ENCODE measurements at regions of chr7 and their contacts with region 1.

Region 1: DNA sequence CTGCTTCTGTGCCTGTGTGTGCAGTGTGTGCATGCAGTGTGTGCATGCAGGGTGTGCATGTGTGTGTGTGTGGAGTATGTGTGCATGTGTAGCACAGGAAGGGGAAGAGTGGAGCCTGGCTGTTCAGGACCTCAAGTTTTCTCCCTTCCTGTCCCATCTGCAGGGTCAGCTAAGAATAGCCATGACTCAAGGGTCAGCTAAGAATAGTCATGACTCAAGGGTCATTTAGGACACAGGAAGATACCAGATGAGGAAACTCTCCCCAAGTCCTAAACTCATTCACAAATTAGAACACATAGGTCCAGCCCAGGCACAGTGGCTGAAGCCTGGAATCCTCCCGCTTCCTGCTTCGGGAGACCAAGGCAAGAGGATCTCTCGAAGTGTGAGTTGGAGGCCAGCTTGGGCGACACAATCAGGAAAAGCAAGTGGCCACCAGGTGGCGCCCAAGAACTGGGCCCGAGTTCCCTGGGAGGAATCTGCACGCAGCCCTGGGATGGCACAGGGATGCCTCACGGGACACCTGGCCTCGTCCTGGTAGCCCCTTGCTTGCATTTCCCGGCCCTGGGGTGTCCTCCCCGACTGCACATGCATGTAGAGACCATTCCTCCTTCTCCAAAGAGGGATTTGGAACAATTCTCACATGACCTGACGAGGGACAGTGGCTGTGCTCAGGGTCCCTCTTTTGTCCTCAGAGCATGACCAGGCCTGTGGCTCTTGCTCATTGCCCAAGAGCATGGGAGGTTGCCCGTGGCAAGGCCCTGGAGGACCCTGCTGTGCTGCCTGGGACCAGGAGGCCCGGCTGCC is 21.4 kb upstream of the VOPP1 start:
- DNase-seq: peak; percentile 79
- ATAC-seq: peak; percentile 60
- H3K4me3 Mint-ChIP-seq: no peak overlapping the region
- H3K27ac Mint-ChIP-seq: no peak overlapping the region
- H3K4me1 Mint-ChIP-seq: peaks cover 5% of the 10 kb centered on the region
- H3K27me3 Mint-ChIP-seq: peaks cover 2% of the 10 kb centered on the region
- CTCF ChIP-seq: peak; percentile 88

Region 2: DNA sequence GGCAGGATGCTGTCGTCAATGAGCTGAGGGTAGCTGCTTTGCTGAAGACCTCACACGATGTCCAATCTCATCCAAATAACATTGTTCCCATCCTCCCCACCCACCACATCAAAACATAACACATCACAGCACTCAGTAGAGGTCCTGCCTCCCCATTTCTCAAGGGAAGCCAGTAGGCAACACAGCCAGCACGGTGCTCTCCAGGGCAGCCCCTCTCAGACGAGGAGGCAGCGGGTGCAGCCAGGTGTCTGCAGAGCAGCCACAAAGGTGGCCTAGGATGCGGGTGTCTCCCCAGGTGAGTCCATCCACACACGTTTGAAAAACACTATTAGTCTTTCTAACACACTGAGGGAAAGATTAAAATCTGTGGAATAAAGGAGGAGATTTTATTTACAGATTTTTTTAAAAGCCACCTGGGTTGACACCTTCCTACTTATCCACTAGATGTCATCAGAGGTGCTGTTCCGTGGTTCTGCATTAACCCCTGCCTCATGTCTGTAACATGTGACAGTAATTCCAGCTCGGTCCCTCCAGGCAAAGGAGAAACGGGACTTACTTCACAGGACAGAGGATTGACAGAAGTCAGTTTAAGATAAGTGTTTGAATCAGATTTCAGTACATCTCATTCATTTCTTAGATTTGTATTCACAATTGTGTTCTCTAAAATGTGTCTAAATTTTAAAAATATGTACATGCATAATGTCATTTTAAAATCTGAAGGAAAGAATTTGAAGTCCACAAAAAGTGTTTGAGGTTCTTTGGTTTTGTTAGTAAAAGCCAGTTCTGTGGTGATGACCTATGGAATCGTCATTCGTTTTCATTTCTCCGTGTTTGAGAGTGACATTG is 160.6 kb before region 1 on chr7:
- CTCF ChIA-PET with region 1: interaction called, 12 read pairs
- POLR2A ChIA-PET with region 1: no interaction called
- intact Hi-C with region 1: loop called (anchors 5 kb)
- DNase-seq: peak; percentile 33
- ATAC-seq: peak; percentile 77
- H3K4me3 Mint-ChIP-seq: no peak overlapping the region
- H3K27ac Mint-ChIP-seq: no peak overlapping the region
- H3K4me1 Mint-ChIP-seq: peaks cover 18% of the 10 kb centered on the region
- H3K27me3 Mint-ChIP-seq: no peaks in the 10 kb centered on the region
- CTCF ChIP-seq: peak; percentile 63

Region 3: GRCh38 chr7:55469271-55469681 is 124.4 kb before region 1 on chr7:
- CTCF ChIA-PET with region 1: interaction called, 11 read pairs
- POLR2A ChIA-PET with region 1: no interaction called
- intact Hi-C with region 1: no loop called
- DNase-seq: peak; percentile 17
- ATAC-seq: peak; percentile 69
- H3K4me3 Mint-ChIP-seq: no peak overlapping the region
- H3K27ac Mint-ChIP-seq: peak overlapping the region; percentile 65
- H3K4me1 Mint-ChIP-seq: peaks cover 44% of the 10 kb centered on the region
- H3K27me3 Mint-ChIP-seq: no peaks in the 10 kb centered on the region
- CTCF ChIP-seq: no peak

Region 4: GRCh38 chr7:55538538-55538937 is 55.2 kb before region 1 on chr7:
- CTCF ChIA-PET with region 1: no interaction called
- POLR2A ChIA-PET with region 1: no interaction called
- intact Hi-C with region 1: no loop called
- DNase-seq: no peak
- ATAC-seq: no peak
- H3K4me3 Mint-ChIP-seq: no peak overlapping the region
- H3K27ac Mint-ChIP-seq: no peak overlapping the region
- H3K4me1 Mint-ChIP-seq: peaks cover 63% of the 10 kb centered on the region
- H3K27me3 Mint-ChIP-seq: no peaks in the 10 kb centered on the region
- CTCF ChIP-seq: no peak

Region 5: DNA sequence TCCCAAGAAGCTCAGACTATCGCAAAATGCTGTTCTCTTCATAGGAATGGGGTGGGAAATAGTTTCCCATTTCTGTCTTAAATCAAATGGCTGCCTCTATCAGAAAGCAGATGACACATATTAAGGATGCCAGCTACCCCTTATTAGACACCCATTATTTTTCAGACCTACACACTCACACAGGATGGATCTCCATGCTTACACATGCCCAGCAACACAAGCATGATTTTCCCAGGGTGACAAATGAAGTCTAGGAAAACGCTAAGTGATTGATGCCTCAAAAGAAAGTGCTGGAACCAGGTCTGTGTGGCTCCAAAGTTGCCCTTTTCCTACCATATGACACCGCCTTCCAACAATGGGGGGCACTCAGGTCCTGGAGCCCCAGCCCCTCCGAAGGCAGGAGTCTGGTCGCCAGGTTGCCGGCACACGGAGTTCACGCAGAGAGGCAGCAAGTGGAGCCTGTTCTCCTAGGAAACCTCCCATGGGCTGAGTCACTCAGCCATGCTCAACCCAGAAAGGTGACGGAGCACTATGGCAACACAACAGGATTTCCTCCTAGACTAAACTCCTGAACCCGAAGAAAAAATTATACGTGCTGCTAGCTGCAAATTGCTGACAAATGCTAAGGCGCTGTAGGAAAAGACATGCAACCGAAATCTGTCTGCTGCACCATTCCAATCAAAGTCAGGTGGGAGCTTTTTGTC is 41.2 kb before region 1 on chr7:
- CTCF ChIA-PET with region 1: no interaction called
- POLR2A ChIA-PET with region 1: no interaction called
- intact Hi-C with region 1: no loop called
- DNase-seq: no peak
- ATAC-seq: no peak
- H3K4me3 Mint-ChIP-seq: no peak overlapping the region
- H3K27ac Mint-ChIP-seq: no peak overlapping the region
- H3K4me1 Mint-ChIP-seq: peaks cover 91% of the 10 kb centered on the region
- H3K27me3 Mint-ChIP-seq: no peaks in the 10 kb centered on the region
- CTCF ChIP-seq: no peak

Region 6: GRCh38 chr7:55572378-55573233 is 21.1 kb before region 1 on chr7 and contains the start of gene VOPP1:
- CTCF ChIA-PET with region 1: interaction called, 13 read pairs
- POLR2A ChIA-PET with region 1: interaction called, 5 read pairs
- intact Hi-C with region 1: no loop called
- DNase-seq: peak; percentile 54
- ATAC-seq: peak; percentile 45
- H3K4me3 Mint-ChIP-seq: peak within 1 kb of the TSS; percentile 87
- H3K27ac Mint-ChIP-seq: peak within 1 kb of the TSS; percentile 95
- H3K4me1 Mint-ChIP-seq: peaks cover 61% of the 10 kb centered on the region
- H3K27me3 Mint-ChIP-seq: no peaks in the 10 kb centered on the region
- CTCF ChIP-seq: no peak
- total RNA-seq, gene VOPP1: 32.6 to 34.7 TPM

Region 7: GRCh38 chr7:55651057-55651456 is 57.3 kb after region 1 on chr7:
- CTCF ChIA-PET with region 1: no interaction called
- POLR2A ChIA-PET with region 1: no interaction called
- intact Hi-C with region 1: no loop called
- DNase-seq: no peak
- ATAC-seq: no peak
- H3K4me3 Mint-ChIP-seq: no peak overlapping the region
- H3K27ac Mint-ChIP-seq: no peak overlapping the region
- H3K4me1 Mint-ChIP-seq: no peaks in the 10 kb centered on the region
- H3K27me3 Mint-ChIP-seq: peaks cover 5% of the 10 kb centered on the region
- CTCF ChIP-seq: no peak

Region 8: DNA sequence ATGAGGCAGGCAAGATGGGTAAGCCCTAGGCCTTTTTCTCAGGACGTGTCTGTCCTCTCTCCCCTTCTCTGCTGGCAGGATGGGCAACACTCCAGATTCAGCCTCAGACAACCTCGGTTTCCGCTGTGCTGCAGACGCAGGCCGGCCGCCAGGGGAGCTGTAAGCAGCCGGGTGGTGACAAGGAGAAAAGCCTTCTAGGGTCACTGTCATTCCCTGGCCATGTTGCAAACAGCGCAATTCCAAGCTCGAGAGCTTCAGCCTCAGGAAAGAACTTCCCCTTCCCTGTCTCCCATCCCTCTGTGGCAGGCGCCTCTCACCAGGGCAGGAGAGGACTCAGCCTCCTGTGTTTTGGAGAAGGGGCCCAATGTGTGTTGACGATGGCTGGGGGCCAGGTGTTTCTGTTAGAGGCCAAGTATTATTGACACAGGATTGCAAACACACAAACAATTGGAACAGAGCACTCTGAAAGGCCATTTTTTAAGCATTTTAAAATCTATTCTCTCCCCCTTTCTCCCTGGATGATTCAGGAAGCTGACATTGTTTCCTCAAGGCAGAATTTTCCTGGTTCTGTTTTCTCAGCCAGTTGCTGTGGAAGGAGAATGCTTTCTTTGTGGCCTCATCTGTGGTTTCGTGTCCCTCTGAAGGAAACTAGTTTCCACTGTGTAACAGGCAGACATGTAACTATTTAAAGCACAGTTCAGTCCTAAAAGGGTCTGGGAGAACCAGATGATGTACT is 485.9 kb after region 1 on chr7:
- CTCF ChIA-PET with region 1: no interaction called
- POLR2A ChIA-PET with region 1: no interaction called
- intact Hi-C with region 1: no loop called
- DNase-seq: no peak
- ATAC-seq: no peak
- H3K4me3 Mint-ChIP-seq: no peak overlapping the region
- H3K27ac Mint-ChIP-seq: no peak overlapping the region
- H3K4me1 Mint-ChIP-seq: peaks cover 3% of the 10 kb centered on the region
- H3K27me3 Mint-ChIP-seq: no peaks in the 10 kb centered on the region
- CTCF ChIP-seq: no peak